Psoas muscle (tissue), 8 donors: ENCODE measurements at regions of chr18 and their contacts with region 1.

Region 1: GRCh38 chr18:36158261-36158867 is 28.7 kb downstream of the ELP2 start:
- DNase-seq: no peak
- ATAC-seq: no peak
- H3K4me3 ChIP-seq: no peak overlapping the region
- H3K27ac ChIP-seq: no peak overlapping the region
- H3K4me1 ChIP-seq: no peaks in the 10 kb centered on the region
- H3K27me3 ChIP-seq: no peaks in the 10 kb centered on the region
- CTCF ChIP-seq: no peak

Region 2: DNA sequence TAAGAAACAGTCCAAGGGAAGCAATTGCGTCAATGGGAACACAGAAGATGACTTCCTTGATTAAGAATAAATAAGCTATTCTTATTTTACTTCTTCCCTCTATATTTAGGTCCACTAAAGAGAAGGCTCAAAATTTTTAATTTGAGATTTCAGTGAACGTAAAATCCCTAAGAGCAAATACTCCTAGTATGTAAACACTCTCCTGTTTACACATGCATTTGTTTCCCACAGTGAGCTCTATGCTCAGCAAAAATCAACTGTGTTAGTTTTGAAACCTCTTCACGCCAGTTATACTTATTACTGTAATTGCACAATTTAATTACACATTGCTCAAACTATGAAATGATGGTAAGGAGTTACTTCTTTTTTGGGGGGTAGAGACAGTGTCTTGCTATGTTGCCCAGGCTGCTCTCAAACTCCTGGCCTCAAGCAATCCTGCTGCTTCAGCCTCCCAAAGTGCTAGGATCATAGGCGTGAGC is 38.0 kb before region 1 on chr18:
- intact Hi-C with region 1: loop called in 1 of 2 experiments (anchors 5 kb)
- DNase-seq: no peak
- ATAC-seq: no peak
- H3K4me3 ChIP-seq: no peak overlapping the region
- H3K27ac ChIP-seq: no peak overlapping the region
- H3K4me1 ChIP-seq: no peaks in the 10 kb centered on the region
- H3K27me3 ChIP-seq: no peaks in the 10 kb centered on the region
- CTCF ChIP-seq: no peak

Region 3: DNA sequence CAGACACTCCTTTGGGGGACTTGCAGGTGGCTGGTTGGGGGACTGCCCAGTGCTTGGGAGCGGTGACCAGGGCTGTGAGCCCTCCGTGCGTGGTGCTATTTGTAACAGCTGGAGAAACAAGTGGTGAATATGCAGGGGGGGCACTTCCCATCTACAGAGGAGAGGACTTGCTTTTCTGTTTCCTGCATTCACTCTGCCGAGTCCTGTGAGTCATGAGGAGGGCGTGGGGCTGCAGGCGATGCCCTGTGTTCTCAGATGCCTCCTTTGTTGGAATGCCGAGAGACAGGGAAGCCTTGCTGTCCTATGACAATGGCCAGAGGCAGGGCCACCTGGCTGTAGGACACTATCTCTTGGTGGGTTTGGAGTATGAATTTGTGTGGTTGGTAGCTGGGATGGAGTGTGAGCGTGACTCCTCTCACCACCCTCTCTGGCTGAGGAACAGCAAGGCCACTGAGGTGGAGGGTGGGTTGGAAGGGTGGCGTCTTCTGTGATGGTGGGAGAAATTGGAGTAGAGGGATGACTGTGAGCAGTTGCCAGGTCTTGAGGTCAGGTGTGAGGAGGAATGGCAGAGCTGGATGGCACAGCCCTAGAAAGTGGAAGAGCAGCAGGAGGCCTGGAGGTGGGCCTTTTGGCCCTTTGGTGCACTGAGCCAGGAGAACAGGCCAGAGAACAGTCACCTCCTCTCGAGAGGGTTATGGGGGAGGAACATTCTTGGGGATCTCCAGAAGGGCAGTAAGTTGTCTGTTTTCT is 163.5 kb after region 1 on chr18:
- intact Hi-C with region 1: no loop called
- DNase-seq: no peak
- ATAC-seq: peak; percentile 32 to 69 (median 58)
- H3K4me3 ChIP-seq: no peak overlapping the region
- H3K27ac ChIP-seq: no peak overlapping the region
- H3K4me1 ChIP-seq: no peaks in the 10 kb centered on the region
- H3K27me3 ChIP-seq: no peaks in the 10 kb centered on the region
- CTCF ChIP-seq: no peak